ENCODE measurements at regions of chr19 and their contacts with region 1.

Region 1: GRCh38 chr19:41310033-41310758 is at the start of gene CCDC97:
- DNase-seq: peak; percentile 94 to 99
- ATAC-seq: peak; percentile 60 to 78
- H3K4me3 ChIP-seq: peak within 1 kb of the TSS; percentile 57
- H3K27ac ChIP-seq: peak within 1 kb of the TSS; percentile 91 to 92
- H3K4me1 ChIP-seq: peaks cover 24% of the 10 kb centered on the region
- CTCF ChIP-seq: no peak
- EP300 ChIP-seq: peak in 1 of 2 experiments; percentile 58; a peak in 1 of 5 replicates
- POLR2A ChIP-seq: no peak; the same call in none of the 2 replicates
- RAD21 ChIP-seq: peak; percentile 19 to 50
- polyA plus RNA-seq, gene CCDC97: 18.7 and 21.4 TPM in 2 replicates

Region 2: DNA sequence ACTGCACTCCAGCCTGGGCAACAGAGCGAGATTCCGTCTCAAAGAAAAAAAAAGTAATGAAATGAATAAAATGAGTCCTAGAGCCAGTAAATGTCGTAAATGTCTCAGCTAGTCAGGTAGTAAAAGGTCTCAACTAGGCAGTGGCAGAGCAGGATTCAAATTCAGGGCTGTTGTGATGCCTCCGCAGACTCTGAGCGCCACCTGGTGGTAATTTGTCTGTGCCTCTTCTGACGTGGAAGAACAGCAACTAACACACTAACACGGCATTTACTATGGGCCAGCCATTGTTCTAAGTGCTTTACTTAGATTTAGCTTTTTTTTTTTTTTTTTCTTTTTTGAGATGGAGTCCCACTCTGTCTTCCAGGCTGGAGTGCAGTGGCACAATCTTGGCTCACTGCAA is 165.8 kb before region 1 on chr19:
- CTCF ChIA-PET with region 1: interaction called, 10 read pairs
- POLR2A ChIA-PET with region 1: no interaction called
- DNase-seq: peak; percentile 85 to 94
- ATAC-seq: peak; percentile 94
- H3K4me3 ChIP-seq: no peak overlapping the region
- H3K27ac ChIP-seq: no peak overlapping the region; a peak in 1 of 6 replicates
- H3K4me1 ChIP-seq: no peaks in the 10 kb centered on the region
- CTCF ChIP-seq: peak; percentile 99
- EP300 ChIP-seq: no peak
- POLR2A ChIP-seq: no peak
- RAD21 ChIP-seq: peak; percentile 99 to 100

Region 3: GRCh38 chr19:41206926-41207750 is 103.1 kb before region 1 on chr19:
- CTCF ChIA-PET with region 1: interaction called, 280 read pairs
- POLR2A ChIA-PET with region 1: interaction called, 20 read pairs
- DNase-seq: no peak
- ATAC-seq: no peak
- H3K4me3 ChIP-seq: no peak overlapping the region
- H3K27ac ChIP-seq: no peak overlapping the region
- H3K4me1 ChIP-seq: no peaks in the 10 kb centered on the region
- CTCF ChIP-seq: no peak
- EP300 ChIP-seq: no peak
- POLR2A ChIP-seq: no peak
- RAD21 ChIP-seq: no peak

Region 4: GRCh38 chr19:41248895-41249294 is 61.3 kb before region 1 on chr19:
- CTCF ChIA-PET with region 1: interaction called, 11 read pairs
- POLR2A ChIA-PET with region 1: no interaction called
- DNase-seq: no peak
- ATAC-seq: peak; percentile 67 to 68; a peak in 5 of 6 replicates
- H3K4me3 ChIP-seq: no peak overlapping the region
- H3K27ac ChIP-seq: no peak overlapping the region
- H3K4me1 ChIP-seq: no peaks in the 10 kb centered on the region
- CTCF ChIP-seq: no peak
- EP300 ChIP-seq: no peak
- POLR2A ChIP-seq: no peak
- RAD21 ChIP-seq: no peak

Region 5: DNA sequence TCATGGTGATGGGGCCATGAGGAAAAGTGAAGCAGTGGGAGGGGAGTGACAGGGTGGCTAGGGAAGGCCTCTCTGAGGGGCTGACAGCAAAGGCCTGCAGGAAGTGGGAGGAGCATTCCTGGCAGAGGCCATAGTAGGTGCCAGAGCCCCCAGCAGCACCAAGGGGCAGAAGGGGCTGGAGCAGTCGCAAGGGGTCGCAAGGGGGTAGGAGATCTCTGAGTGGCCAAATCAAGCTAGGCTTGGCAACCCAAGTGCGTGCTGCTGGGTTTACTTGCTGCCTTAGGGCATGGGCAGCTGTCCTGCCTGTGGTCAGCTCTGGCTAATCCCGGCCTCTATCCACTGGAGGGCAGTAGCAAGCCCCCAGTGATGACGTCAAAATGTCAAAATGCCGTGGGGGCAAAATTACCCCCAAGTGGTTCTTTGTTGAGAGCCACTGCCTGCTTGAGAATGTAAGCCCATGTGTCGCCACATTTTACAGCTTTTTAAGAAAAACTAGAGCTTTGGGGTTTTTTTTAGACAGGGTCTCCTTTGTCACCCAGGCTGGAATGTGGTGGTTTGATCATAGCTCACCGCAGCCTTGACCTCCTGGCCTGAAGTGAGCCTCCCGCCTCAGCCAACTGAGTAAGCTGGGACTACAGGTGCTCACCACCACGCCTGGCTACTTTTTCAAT is 11.5 kb after region 1 on chr19:
- CTCF ChIA-PET with region 1: interaction called, 295 read pairs
- POLR2A ChIA-PET with region 1: interaction called, 9 read pairs
- DNase-seq: peak; percentile 76 to 95
- ATAC-seq: peak; percentile 10 to 53; a peak in 3 of 6 replicates
- H3K4me3 ChIP-seq: no peak overlapping the region
- H3K27ac ChIP-seq: peak overlapping the region; percentile 81 to 91; a peak in 5 of 6 replicates
- H3K4me1 ChIP-seq: peaks cover 56% of the 10 kb centered on the region
- CTCF ChIP-seq: peak; percentile 88
- EP300 ChIP-seq: no peak
- POLR2A ChIP-seq: no peak
- RAD21 ChIP-seq: peak; percentile 61 to 62; a peak in 4 of 5 replicates

Region 6: GRCh38 chr19:41353466-41354342 is 43.5 kb after region 1 on chr19 and contains the start of gene TGFB1:
- CTCF ChIA-PET with region 1: interaction called, 295 read pairs
- POLR2A ChIA-PET with region 1: interaction called, 6 read pairs
- DNase-seq: peak; percentile 92 to 100
- ATAC-seq: peak; percentile 53 to 71
- H3K4me3 ChIP-seq: peak within 1 kb of the TSS; percentile 72
- H3K27ac ChIP-seq: peak within 1 kb of the TSS; percentile 90 to 92
- H3K4me1 ChIP-seq: peaks cover 15% of the 10 kb centered on the region
- CTCF ChIP-seq: peak; percentile 99
- EP300 ChIP-seq: peak in 1 of 2 experiments; percentile 42; a peak in 1 of 5 replicates
- POLR2A ChIP-seq: peak; percentile 63
- RAD21 ChIP-seq: peak in 1 of 2 experiments; percentile 76; a peak in 4 of 5 replicates
- polyA plus RNA-seq, gene TGFB1: 6.0 and 13.2 TPM in 2 replicates

Region 7: DNA sequence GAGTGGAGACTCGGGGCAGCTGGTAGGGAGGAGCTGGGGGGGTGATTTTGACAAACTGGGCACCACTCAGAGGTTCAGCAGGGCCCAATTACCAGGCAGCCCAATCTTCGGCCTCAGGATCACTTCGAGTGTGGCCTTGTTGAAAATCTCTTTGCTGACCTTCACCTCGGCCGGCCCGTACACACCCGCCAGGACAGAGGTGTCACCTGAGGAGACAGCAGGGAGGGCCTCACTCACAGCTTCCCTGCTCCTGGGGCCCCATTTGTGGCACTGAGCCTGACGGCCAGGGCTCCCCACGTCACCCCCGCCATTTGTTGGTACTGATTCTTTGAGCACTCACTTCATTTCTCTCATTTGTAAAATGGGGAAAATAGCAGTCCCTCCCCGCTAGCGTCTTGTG is 82.6 kb after region 1 on chr19:
- CTCF ChIA-PET with region 1: no interaction called
- POLR2A ChIA-PET with region 1: no interaction called
- DNase-seq: no peak
- ATAC-seq: no peak
- H3K4me3 ChIP-seq: no peak overlapping the region
- H3K27ac ChIP-seq: no peak overlapping the region
- H3K4me1 ChIP-seq: peaks cover 11% of the 10 kb centered on the region; the same call in 2 of the 3 replicates
- CTCF ChIP-seq: no peak
- EP300 ChIP-seq: no peak
- POLR2A ChIP-seq: no peak
- RAD21 ChIP-seq: no peak

Region 8: GRCh38 chr19:41409288-41409687 is 99.1 kb after region 1 on chr19:
- CTCF ChIA-PET with region 1: no interaction called
- POLR2A ChIA-PET with region 1: no interaction called
- DNase-seq: peak; percentile 55 to 60
- ATAC-seq: peak; percentile 55 to 58; a peak in 5 of 6 replicates
- H3K4me3 ChIP-seq: no peak overlapping the region
- H3K27ac ChIP-seq: no peak overlapping the region
- H3K4me1 ChIP-seq: peaks cover 12% of the 10 kb centered on the region
- CTCF ChIP-seq: no peak
- EP300 ChIP-seq: no peak
- POLR2A ChIP-seq: no peak
- RAD21 ChIP-seq: no peak

Region 9: DNA sequence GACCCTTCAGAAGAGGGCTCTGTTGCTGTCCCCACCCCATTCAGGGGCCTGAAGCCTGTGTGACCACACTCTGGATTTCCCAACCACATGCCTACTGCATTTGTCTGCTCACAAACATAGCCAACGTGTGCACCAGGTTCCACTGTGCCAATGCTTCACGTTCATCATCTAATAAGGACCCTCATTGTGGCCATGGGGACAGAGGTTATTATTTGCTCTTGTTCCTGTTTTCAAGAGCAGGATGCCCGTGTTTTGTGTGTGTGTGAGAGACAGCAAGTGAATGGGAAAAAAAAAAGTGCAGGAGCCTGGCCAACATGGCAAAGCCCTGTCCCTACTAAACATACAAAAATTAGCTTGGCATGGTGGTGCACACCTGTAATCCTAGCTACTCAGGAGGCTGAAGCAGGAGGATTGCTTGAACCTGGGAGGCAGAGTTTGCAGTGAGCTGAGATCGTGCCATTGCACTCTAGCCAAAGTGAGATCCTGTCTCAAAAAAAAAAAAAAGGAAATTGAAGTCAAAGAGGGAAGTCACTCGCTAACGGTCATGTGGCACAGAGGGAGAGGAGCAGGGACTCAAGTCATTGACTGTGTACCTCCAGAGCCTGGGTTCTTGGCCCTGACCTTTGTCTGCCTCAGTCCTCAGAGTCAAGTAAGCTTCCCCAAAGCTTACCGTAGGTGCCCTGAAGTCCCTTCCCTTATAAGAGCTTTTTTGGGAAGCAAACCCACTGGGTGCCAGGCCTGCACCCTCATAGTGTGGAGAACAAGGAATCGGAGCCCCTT is 110.1 kb after region 1 on chr19:
- CTCF ChIA-PET with region 1: no interaction called
- POLR2A ChIA-PET with region 1: no interaction called
- DNase-seq: no peak
- ATAC-seq: no peak
- H3K4me3 ChIP-seq: no peak overlapping the region
- H3K27ac ChIP-seq: no peak overlapping the region
- H3K4me1 ChIP-seq: no peaks in the 10 kb centered on the region
- CTCF ChIP-seq: no peak
- EP300 ChIP-seq: no peak
- POLR2A ChIP-seq: no peak
- RAD21 ChIP-seq: no peak